MCF 10A (cell line): ENCODE measurements at regions of chr1 and their contacts with region 1.

Region 1: GRCh38 chr1:220803401-220804201 is 16.9 kb downstream of the MTARC1 start:
- DNase-seq: peak; percentile 74
- H3K4me3 Mint-ChIP-seq: no peak overlapping the region
- H3K27ac Mint-ChIP-seq: no peak overlapping the region
- H3K4me1 Mint-ChIP-seq: no peaks in the 10 kb centered on the region
- H3K27me3 Mint-ChIP-seq: no peaks in the 10 kb centered on the region
- CTCF ChIP-seq: peak; percentile 97

Region 2: DNA sequence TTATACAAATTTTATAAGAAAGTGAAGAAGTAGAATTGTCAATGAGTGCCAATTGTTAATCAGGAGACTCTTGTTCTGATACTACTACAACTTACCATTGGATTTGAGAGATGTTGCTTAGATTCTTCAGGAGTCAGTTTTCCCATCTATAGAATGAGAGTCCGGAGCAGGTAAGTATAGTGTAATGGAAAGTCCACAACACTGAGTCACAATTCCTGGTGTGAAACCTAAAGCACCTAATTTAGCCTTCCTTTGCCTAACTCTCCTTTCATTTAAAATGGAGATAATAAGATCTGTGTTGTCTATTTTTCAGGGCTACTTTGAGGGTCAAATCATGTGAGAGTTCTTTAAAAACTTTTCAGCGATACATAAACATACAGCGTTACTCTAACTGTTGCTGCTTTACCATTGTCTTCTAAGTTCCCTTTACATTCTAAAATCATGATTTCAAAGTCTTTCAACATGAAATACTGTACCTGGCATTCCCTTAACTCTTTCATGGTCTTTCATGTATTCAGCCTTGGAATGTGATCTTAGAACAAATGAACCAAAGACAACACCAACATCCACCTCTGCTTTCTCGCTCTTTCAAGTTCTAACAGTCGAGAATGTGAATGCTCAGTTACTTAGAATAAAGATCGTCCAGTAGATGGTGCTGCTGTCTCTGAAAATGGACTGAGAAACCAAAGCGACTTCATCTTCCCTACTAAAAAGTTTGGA is 966.2 kb before region 1 on chr1:
- CTCF ChIA-PET with region 1: no interaction called
- POLR2A ChIA-PET with region 1: no interaction called
- intact Hi-C with region 1: loop called (anchors 1 kb)
- DNase-seq: peak; percentile 85
- H3K4me3 Mint-ChIP-seq: no peak overlapping the region
- H3K27ac Mint-ChIP-seq: no peak overlapping the region
- H3K4me1 Mint-ChIP-seq: no peaks in the 10 kb centered on the region
- H3K27me3 Mint-ChIP-seq: peaks cover 95% of the 10 kb centered on the region
- CTCF ChIP-seq: peak; percentile 85

Region 3: DNA sequence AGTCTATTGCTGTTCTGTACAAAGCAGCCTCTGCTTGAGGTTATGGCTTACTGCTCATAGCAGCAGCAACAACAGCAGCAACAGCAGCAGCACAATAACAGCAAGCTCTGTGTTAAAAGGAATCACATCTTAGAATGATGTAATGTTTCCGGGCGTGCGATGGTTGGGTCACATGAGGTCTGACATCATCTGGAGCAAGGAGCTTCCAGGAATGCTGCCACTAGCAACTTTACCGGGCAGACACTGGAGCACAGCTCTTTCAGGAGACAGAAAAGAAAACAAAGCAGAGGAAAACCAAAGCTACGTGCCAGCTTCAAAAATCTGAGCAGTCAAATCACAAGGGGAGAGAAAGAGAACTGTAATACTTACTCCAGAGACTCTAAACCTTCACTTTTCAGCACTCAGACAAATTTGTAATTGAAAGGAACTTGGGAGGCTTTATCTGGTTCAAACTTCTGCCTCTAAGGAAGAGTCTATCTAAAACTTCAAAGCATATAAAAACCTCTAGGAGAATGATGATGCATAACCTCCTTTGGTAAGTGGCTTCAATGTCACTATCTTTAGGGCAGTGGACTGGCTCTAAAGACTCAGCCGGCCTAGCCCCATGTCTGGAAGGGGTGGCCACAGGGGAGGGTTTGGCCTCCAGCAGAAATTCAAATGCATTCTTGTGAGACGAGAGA is 503.0 kb before region 1 on chr1:
- CTCF ChIA-PET with region 1: interaction called, 11 read pairs
- POLR2A ChIA-PET with region 1: no interaction called
- intact Hi-C with region 1: no loop called
- DNase-seq: peak; percentile 91
- H3K4me3 Mint-ChIP-seq: peak overlapping the region; percentile 25
- H3K27ac Mint-ChIP-seq: peak overlapping the region; percentile 85
- H3K4me1 Mint-ChIP-seq: peaks cover 13% of the 10 kb centered on the region
- H3K27me3 Mint-ChIP-seq: no peaks in the 10 kb centered on the region
- CTCF ChIP-seq: no peak

Region 4: DNA sequence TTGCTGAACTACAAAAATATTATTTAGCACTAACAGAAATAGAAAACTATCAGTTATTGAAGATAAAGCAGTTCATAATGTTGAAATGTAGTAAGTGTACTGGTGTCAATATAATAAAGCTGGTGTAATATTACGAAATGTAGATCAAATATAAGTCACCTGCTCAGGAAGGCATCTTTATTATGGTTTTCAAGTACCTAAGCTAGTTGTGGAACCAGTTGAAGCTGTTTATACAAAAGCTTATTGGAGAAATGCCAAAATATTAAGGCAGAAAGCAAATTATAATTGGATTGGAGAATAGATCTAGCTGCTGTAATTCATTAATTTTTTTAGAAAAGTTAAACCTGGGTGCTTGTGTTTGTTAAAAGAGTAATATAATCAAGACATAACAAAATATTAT is 281.8 kb before region 1 on chr1:
- CTCF ChIA-PET with region 1: no interaction called
- POLR2A ChIA-PET with region 1: no interaction called
- intact Hi-C with region 1: no loop called
- DNase-seq: no peak
- H3K4me3 Mint-ChIP-seq: no peak overlapping the region
- H3K27ac Mint-ChIP-seq: no peak overlapping the region
- H3K4me1 Mint-ChIP-seq: peaks cover under 1% of the 10 kb centered on the region
- H3K27me3 Mint-ChIP-seq: no peaks in the 10 kb centered on the region
- CTCF ChIP-seq: no peak

Region 5: GRCh38 chr1:220770245-220770918 is 33.2 kb before region 1 on chr1:
- CTCF ChIA-PET with region 1: interaction called, 75 read pairs
- POLR2A ChIA-PET with region 1: no interaction called
- intact Hi-C with region 1: no loop called
- DNase-seq: no peak
- H3K4me3 Mint-ChIP-seq: no peak overlapping the region
- H3K27ac Mint-ChIP-seq: no peak overlapping the region
- H3K4me1 Mint-ChIP-seq: no peaks in the 10 kb centered on the region
- H3K27me3 Mint-ChIP-seq: no peaks in the 10 kb centered on the region
- CTCF ChIP-seq: no peak

Region 6: GRCh38 chr1:220825819-220826551 is 22.4 kb after region 1 on chr1:
- CTCF ChIA-PET with region 1: interaction called, 21 read pairs
- POLR2A ChIA-PET with region 1: no interaction called
- intact Hi-C with region 1: no loop called
- DNase-seq: peak; percentile 60
- H3K4me3 Mint-ChIP-seq: no peak overlapping the region
- H3K27ac Mint-ChIP-seq: no peak overlapping the region
- H3K4me1 Mint-ChIP-seq: peaks cover 10% of the 10 kb centered on the region
- H3K27me3 Mint-ChIP-seq: peaks cover 17% of the 10 kb centered on the region
- CTCF ChIP-seq: no peak